ENCODE measurements at regions of chr6 and their contacts with region 1.

Region 1: GRCh38 chr6:18595774-18596530 is 208.8 kb downstream of the RNF144B start:
- DNase-seq: peak; percentile 95
- H3K4me3 ChIP-seq: no peak overlapping the region
- H3K27ac ChIP-seq: peak overlapping the region; percentile 72
- H3K4me1 ChIP-seq: peaks cover 48% of the 10 kb centered on the region
- H3K27me3 ChIP-seq: no peaks in the 10 kb centered on the region
- CTCF ChIP-seq: peak; percentile 96

Region 2: DNA sequence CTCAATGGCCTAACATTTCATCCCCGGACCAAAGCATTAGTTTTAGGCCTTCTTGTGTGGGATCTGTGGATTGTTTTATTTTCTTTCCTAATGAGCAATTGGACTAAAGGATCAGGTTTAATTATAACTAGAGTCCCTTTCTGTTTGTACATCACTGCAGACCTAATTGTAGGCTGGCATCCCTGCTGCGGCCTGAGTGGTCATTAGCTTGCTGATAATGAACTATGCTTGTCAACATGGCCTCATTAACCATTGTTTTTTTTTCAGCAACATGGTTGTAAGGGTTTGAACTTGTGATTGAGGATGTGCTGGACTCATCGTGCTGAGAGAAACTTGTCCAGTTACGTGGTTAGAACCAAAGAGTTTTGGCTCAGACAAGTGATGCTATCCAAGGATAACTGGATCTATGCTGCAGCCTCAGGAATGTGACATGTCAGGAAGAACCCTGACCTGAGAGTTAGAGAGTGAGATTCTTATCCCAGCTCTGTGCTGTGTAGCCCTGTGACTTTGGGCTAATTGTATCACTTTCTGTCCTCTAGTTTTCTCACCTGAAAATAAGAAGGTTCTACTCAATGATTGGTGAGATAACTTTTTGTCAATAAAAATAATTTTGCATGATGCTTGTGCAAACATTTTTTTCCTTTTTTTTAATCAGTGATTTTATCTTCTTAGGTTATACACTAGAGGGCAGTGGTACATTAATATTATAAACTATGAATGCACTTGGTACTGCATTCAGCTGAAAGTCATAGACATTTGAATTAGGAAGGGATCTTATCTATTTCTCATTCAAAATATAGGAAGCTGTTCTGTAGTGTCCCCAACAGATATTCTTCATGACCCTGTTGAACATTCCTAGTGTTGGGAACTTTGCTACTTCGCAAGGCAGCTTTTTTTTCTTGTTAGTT is 67.9 kb before region 1 on chr6:
- CTCF ChIA-PET with region 1: interaction called, 7 read pairs
- POLR2A ChIA-PET with region 1: no interaction called
- intact Hi-C with region 1: loop called (anchors 1 kb)
- DNase-seq: peak; percentile 80
- H3K4me3 ChIP-seq: no peak overlapping the region
- H3K27ac ChIP-seq: peak overlapping the region; percentile 82
- H3K4me1 ChIP-seq: peaks cover 44% of the 10 kb centered on the region
- H3K27me3 ChIP-seq: no peaks in the 10 kb centered on the region
- CTCF ChIP-seq: peak; percentile 66

Region 3: GRCh38 chr6:18733921-18734550 is 138.1 kb after region 1 on chr6:
- CTCF ChIA-PET with region 1: no interaction called
- POLR2A ChIA-PET with region 1: interaction called, 9 read pairs
- intact Hi-C with region 1: loop called (anchors 1 kb)
- DNase-seq: peak; percentile 97
- H3K4me3 ChIP-seq: no peak overlapping the region
- H3K27ac ChIP-seq: peak overlapping the region; percentile 97
- H3K4me1 ChIP-seq: peaks cover 41% of the 10 kb centered on the region
- H3K27me3 ChIP-seq: no peaks in the 10 kb centered on the region
- CTCF ChIP-seq: no peak

Region 4: GRCh38 chr6:18823782-18824386 is 227.9 kb after region 1 on chr6:
- CTCF ChIA-PET with region 1: no interaction called
- POLR2A ChIA-PET with region 1: no interaction called
- intact Hi-C with region 1: loop called (anchors 2 kb)
- DNase-seq: peak; percentile 70
- H3K4me3 ChIP-seq: no peak overlapping the region
- H3K27ac ChIP-seq: no peak overlapping the region
- H3K4me1 ChIP-seq: no peaks in the 10 kb centered on the region
- H3K27me3 ChIP-seq: no peaks in the 10 kb centered on the region
- CTCF ChIP-seq: peak; percentile 84

Region 5: DNA sequence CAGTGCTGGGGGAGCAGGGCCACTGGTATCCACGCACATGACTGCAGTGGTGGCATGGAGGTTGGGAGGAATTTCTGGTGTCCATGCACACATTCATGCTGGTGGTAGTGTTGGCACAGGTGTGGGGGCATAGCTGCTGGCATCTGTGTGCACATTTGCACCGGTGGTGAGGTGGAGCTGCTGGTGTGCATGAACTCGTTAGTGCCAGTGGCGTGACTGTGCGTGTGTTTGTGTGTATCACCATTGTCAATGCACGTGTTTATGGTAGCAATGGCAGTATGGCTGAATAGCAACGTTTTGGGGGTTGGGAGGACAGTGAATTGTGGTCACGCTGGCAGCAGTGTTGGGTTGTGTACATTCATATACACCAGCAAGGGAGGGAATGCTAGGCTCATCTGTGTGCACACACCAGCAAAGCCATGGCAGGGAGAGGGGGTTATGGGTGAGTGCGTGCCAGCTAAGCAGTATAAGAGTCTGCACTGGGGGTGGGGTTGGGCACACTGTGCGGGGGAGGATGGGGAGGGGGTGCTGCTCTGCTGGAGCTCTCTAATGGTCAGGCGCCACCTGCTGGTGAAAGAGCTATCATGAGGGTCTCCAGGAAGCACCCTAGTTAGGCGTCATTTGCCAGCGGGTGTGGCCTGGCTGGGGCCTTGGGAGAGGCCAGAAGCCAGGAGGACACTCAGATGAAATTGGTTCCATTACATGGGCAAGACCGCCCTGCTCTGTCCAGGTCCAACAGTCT is 615.1 kb after region 1 on chr6:
- CTCF ChIA-PET with region 1: no interaction called
- POLR2A ChIA-PET with region 1: no interaction called
- intact Hi-C with region 1: loop called (anchors 10 kb)
- DNase-seq: peak; percentile 58
- H3K4me3 ChIP-seq: no peak overlapping the region
- H3K27ac ChIP-seq: no peak overlapping the region
- H3K4me1 ChIP-seq: no peaks in the 10 kb centered on the region
- H3K27me3 ChIP-seq: no peaks in the 10 kb centered on the region
- CTCF ChIP-seq: peak; percentile 71

Region 6: GRCh38 chr6:19851241-19852089 is 1255.5 kb after region 1 on chr6:
- CTCF ChIA-PET with region 1: no interaction called
- POLR2A ChIA-PET with region 1: no interaction called
- intact Hi-C with region 1: loop called (anchors 10 kb)
- DNase-seq: peak; percentile 87
- H3K4me3 ChIP-seq: no peak overlapping the region
- H3K27ac ChIP-seq: peak overlapping the region; percentile 49
- H3K4me1 ChIP-seq: peaks cover 20% of the 10 kb centered on the region
- H3K27me3 ChIP-seq: no peaks in the 10 kb centered on the region
- CTCF ChIP-seq: peak; percentile 94